ENCODE measurements at regions of chr5 and their contacts with region 1.

Region 1: DNA sequence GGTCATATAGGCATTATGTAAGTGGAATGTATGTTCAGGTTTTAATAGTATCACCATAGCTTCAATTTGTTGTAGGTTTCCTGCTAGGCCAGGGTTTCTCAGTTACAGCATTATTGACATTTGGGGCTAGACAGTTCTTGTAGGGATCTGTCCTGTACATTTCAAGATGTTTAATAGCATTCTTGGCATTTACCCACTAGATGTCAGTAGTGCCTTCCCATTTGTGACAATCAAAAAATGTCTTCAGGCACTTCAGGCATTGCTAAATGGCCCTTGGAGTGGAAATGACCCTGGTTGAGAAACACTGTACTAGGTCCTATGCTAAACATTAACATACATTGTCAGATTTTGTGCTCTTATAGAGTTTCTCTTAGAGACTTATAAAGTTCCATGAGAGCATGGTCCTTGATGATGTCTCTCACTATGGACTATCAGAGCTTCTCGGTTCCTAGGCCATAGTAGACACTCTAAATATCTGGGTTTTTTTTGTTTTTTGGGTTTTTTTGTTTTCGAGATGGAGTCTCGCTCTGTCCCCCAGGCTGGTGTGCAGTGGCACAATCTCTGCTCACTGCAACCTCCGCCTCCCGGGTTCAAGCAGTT is 1.4 kb downstream of the KIF20A start:
- DNase-seq: peak; percentile 64
- ATAC-seq: no peak
- H3K4me3 ChIP-seq: no peak overlapping the region
- H3K27ac ChIP-seq: no peak overlapping the region
- H3K4me1 ChIP-seq: no peaks in the 10 kb centered on the region
- H3K27me3 ChIP-seq: no peaks in the 10 kb centered on the region
- CTCF ChIP-seq: peak; percentile 48
- POLR2A ChIP-seq: no peak
- RAD21 ChIP-seq: peak; percentile 67

Region 2: GRCh38 chr5:138282920-138283742 is 102.8 kb after region 1 on chr5:
- CTCF ChIA-PET with region 1: no interaction called
- POLR2A ChIA-PET with region 1: no interaction called
- dilution Hi-C with region 1: no loop called
- in situ Hi-C with region 1: no loop called
- intact Hi-C with region 1: loop called (anchors 1 kb)
- DNase-seq: peak; percentile 67
- ATAC-seq: peak; percentile 99
- H3K4me3 ChIP-seq: no peak overlapping the region
- H3K27ac ChIP-seq: no peak overlapping the region
- H3K4me1 ChIP-seq: no peaks in the 10 kb centered on the region
- H3K27me3 ChIP-seq: no peaks in the 10 kb centered on the region
- CTCF ChIP-seq: peak; percentile 64
- POLR2A ChIP-seq: no peak
- RAD21 ChIP-seq: peak; percentile 67

Region 3: GRCh38 chr5:138418444-138418843 is 238.2 kb after region 1 on chr5:
- CTCF ChIA-PET with region 1: no interaction called
- POLR2A ChIA-PET with region 1: no interaction called
- dilution Hi-C with region 1: no loop called
- in situ Hi-C with region 1: loop called (anchors 10 kb)
- intact Hi-C with region 1: no loop called
- DNase-seq: no peak
- ATAC-seq: no peak
- H3K4me3 ChIP-seq: no peak overlapping the region
- H3K27ac ChIP-seq: no peak overlapping the region
- H3K4me1 ChIP-seq: no peaks in the 10 kb centered on the region
- H3K27me3 ChIP-seq: no peaks in the 10 kb centered on the region
- CTCF ChIP-seq: no peak
- POLR2A ChIP-seq: no peak
- RAD21 ChIP-seq: no peak

Measured in IMR-90 (cell line).